Head of caudate nucleus (tissue), 42 donors: ENCODE measurements at regions of chr12 and their contacts with region 1.

Region 1: DNA sequence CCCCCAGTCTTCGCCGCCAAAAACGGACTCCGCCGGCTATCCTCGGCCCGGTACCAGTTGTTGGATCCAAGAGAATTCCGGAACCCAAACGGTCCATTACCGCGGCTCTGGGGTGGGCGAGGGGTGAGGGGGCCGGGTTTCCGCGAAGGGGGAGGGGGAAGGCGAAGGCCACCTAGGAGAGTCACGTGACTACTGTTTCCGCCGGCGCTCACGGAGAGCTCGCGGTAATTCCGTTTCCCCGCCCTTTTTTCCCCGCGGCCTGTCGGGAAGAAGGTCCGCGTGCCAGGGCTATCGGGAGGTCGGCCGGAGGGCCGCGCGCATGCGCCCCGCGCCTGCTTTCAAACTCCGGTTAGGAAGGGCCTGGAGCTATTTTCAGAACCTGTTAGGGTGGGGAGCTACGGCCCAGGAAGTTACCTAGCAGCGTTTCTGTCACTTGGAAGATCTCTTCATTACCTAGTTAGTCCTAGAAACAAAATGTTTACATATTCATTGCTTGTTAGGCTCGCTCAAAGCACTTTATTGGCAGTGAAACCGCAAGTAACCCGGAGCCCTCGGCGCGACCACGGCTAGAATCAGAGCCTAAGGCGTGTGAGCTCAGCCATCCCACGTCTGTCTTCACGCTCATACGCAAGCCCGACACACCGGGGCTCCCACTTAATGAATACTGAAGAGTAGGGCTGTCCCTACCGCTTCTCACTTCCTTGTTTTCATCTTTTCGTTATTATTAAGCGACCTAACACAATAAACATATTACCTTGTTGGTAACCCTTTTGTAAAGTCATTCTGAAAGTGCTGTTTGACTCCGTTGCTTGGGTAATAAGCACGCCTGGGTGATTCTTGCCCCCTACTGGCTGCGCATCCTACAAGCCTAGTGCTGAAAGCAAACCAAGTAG is 624 bp upstream of the SBNO1 start:
- DNase-seq: peak; percentile 92 to 99 (median 98)

Region 2: GRCh38 chr12:123388177-123388947 is 23.1 kb after region 1 on chr12:
- intact Hi-C with region 1: loop called (anchors 2 kb)
- DNase-seq: peak; percentile 50 to 90 (median 82)